Heart left ventricle (tissue), 16 donors: ENCODE measurements at regions of chr1 and their contacts with region 1.

Region 1: GRCh38 chr1:170698301-170699275 is 34.7 kb downstream of the PRRX1 start:
- DNase-seq: no peak
- ATAC-seq: peak in 3 of 4 donors; percentile 58 to 68 (median 60)
- H3K4me3 ChIP-seq: peak overlapping the region in 4 of 12 donors; percentile 0 to 27 (median 1)
- H3K27ac ChIP-seq: peak overlapping the region in 11 of 12 donors; percentile 23 to 81 (median 65)
- H3K4me1 ChIP-seq: peaks cover 0 to 91% (median 55%) of the 10 kb centered on the region in 12 donors
- H3K27me3 ChIP-seq: no peaks in the 10 kb centered on the region
- CTCF ChIP-seq: no peak
- POLR2A ChIP-seq: no peak

Region 2: GRCh38 chr1:170729225-170730002 is 30.8 kb after region 1 on chr1:
- intact Hi-C with region 1: loop called in 2 of 10 experiments (anchors 5 kb)
- DNase-seq: peak in 3 of 5 donors; percentile 26 to 65 (median 31)
- ATAC-seq: peak; percentile 90 to 96 (median 92)
- H3K4me3 ChIP-seq: no peak overlapping the region
- H3K27ac ChIP-seq: peak overlapping the region; percentile 5 to 79 (median 68)
- H3K4me1 ChIP-seq: peaks cover 0 to 44% (median 29%) of the 10 kb centered on the region in 12 donors
- H3K27me3 ChIP-seq: no peaks in the 10 kb centered on the region
- CTCF ChIP-seq: no peak
- POLR2A ChIP-seq: no peak

Region 3: DNA sequence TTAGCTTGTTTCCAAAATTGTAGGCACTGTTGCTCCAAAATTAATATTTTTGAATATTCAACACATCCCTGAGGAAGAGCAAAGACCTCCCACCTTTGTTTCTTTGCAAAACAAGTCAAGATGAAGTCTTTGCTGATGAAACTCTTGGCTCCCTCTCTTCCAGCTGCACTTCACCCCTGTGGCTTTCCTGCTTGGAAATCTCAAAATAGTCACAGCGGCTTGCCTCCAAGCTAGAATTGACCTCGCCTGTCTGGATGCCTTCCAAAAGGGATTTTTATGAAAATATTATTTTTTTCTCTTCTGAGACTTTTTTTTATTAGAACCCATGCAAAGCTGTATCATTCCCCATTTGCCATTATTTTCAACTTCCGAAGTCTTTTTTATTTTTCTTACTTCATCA is 165.7 kb after region 1 on chr1:
- intact Hi-C with region 1: loop called in 1 of 10 experiments (anchors 10 kb)
- DNase-seq: peak in 4 of 5 donors; percentile 29 to 59 (median 52)
- ATAC-seq: peak; percentile 33 to 89 (median 68)
- H3K4me3 ChIP-seq: no peak overlapping the region
- H3K27ac ChIP-seq: peak overlapping the region in 7 of 12 donors; percentile 18 to 52 (median 29)
- H3K4me1 ChIP-seq: peaks cover 0 to 30% (median 3%) of the 10 kb centered on the region in 12 donors
- H3K27me3 ChIP-seq: no peaks in the 10 kb centered on the region
- CTCF ChIP-seq: no peak
- POLR2A ChIP-seq: no peak